A673 (cell line): ENCODE measurements at regions of chr19 and their contacts with region 1.

Region 1: DNA sequence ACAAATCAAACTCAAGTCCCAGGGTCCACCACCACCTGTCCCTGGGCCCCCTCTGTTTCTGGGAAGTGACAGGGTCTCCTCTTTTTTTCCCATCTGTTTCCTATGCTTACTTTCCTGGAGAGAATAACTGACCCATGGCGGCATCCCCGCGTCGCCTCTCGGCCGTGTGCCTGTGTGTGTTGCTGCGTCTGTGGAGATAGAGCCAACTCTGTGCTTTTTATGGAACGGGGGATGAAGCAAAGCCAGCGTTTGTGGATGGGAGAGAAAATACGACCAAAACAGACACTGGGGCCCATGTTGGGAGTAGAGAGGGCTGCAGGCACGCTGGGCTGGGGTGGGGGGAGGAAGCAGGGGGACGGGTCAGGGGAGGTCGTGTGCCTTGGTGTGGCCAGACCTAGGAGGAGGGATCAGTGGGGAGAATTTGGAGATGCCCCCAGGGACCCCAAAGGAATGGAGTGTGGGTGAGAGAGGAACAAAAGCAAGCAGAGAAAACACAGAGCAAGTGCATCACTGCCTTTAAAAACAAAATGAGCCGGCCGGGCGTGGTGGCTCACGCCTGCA is 16.6 kb downstream of the PLK5 start:
- DNase-seq: no peak
- H3K4me3 ChIP-seq: no peak overlapping the region
- H3K27ac ChIP-seq: no peak overlapping the region
- H3K4me1 ChIP-seq: peaks cover 8% of the 10 kb centered on the region
- H3K27me3 ChIP-seq: no peaks in the 10 kb centered on the region
- CTCF ChIP-seq: no peak

Region 2: GRCh38 chr19:1360818-1361461 is 179.5 kb before region 1 on chr19:
- CTCF ChIA-PET with region 1: no interaction called
- POLR2A ChIA-PET with region 1: no interaction called
- intact Hi-C with region 1: no loop called
- DNase-seq: peak; percentile 89
- H3K4me3 ChIP-seq: peak overlapping the region; percentile 29
- H3K27ac ChIP-seq: peak overlapping the region; percentile 83
- H3K4me1 ChIP-seq: peaks cover 51% of the 10 kb centered on the region
- H3K27me3 ChIP-seq: no peaks in the 10 kb centered on the region
- CTCF ChIP-seq: no peak

Region 3: GRCh38 chr19:1523412-1524291 is 16.8 kb before region 1 on chr19 and contains the start of gene PLK5:
- CTCF ChIA-PET with region 1: no interaction called
- POLR2A ChIA-PET with region 1: no interaction called
- intact Hi-C with region 1: no loop called
- DNase-seq: no peak
- H3K4me3 ChIP-seq: peak within 1 kb of the TSS; percentile 26
- H3K27ac ChIP-seq: no peak within 1 kb of the TSS
- H3K4me1 ChIP-seq: peaks cover 4% of the 10 kb centered on the region
- H3K27me3 ChIP-seq: peaks cover 28% of the 10 kb centered on the region
- CTCF ChIP-seq: no peak
- total RNA-seq, gene PLK5: not detected in 2 replicates

Region 4: DNA sequence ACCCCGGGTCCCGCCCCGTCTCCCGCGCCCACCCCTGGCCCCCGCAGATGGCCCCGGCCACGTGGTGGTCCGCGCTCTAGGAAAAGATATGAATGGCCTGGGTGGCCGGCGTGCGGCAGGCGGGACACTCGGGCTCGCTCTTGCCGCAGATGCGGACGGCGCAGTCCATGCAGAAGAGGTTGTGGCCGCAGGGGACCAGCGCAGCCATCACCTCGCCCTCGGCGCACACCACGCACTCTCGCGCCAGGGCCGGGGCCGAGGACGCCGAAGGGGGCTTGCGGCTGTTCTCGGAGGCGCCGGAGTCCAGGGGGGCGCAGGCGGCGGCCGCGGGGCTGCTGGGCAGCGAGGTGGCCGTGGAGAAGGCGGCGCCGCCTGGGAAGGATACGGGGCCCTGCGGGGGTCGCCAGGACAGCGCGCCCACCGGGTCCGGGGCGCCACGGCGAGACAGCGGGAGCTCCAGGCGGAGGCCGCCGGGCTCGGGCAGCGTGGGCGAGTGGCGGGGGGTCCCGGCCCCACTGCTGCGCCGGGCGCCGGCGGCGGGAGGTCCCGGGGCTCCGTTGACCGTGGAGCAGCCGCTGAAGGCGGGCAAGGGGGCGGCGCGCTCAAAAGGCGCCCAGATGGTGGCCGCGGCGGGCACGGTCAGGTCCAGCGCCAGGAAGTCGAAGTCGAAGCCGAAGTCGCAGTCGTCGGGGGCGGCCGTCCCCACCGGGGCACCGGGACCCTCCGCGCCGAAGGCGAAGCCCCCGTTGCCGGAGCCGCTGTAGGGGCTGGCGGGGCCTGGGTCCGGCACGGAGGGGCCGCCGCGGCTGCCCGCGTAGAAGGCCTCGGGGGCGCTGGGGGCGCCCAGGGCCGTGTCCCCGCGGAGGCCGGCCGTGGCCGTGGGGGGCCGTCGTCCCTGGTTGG is 15.3 kb after region 1 on chr19:
- CTCF ChIA-PET with region 1: no interaction called
- POLR2A ChIA-PET with region 1: no interaction called
- intact Hi-C with region 1: no loop called
- DNase-seq: no peak
- H3K4me3 ChIP-seq: no peak overlapping the region
- H3K27ac ChIP-seq: no peak overlapping the region
- H3K4me1 ChIP-seq: no peaks in the 10 kb centered on the region
- H3K27me3 ChIP-seq: no peaks in the 10 kb centered on the region
- CTCF ChIP-seq: no peak

Region 5: GRCh38 chr19:1812469-1813196 is 272.2 kb after region 1 on chr19:
- CTCF ChIA-PET with region 1: no interaction called
- POLR2A ChIA-PET with region 1: no interaction called
- intact Hi-C with region 1: loop called (anchors 10 kb)
- DNase-seq: peak; percentile 96
- H3K4me3 ChIP-seq: peak overlapping the region; percentile 59
- H3K27ac ChIP-seq: peak overlapping the region; percentile 67
- H3K4me1 ChIP-seq: peaks cover 4% of the 10 kb centered on the region
- H3K27me3 ChIP-seq: no peaks in the 10 kb centered on the region
- CTCF ChIP-seq: peak; percentile 76